BJ (cell line): ENCODE measurements at regions of chr1 and their contacts with region 1.

Region 1: GRCh38 chr1:27383039-27383605 is at the start of gene CD164L2:
- DNase-seq: no peak
- H3K4me3 ChIP-seq: no peak within 1 kb of the TSS
- H3K27me3 ChIP-seq: peaks cover 9% of the 10 kb centered on the region
- CTCF ChIP-seq: no peak
- polyA plus RNA-seq, gene CD164L2: not detected in 2 replicates

Region 2: GRCh38 chr1:27357281-27358037 is 25.7 kb before region 1 on chr1:
- CTCF ChIA-PET with region 1: interaction called, 15 read pairs
- POLR2A ChIA-PET with region 1: no interaction called
- DNase-seq: no peak
- H3K4me3 ChIP-seq: no peak overlapping the region
- H3K27me3 ChIP-seq: no peaks in the 10 kb centered on the region
- CTCF ChIP-seq: peak; percentile 91

Region 3: GRCh38 chr1:27365372-27366112 is 17.6 kb before region 1 on chr1:
- CTCF ChIA-PET with region 1: interaction called, 29 read pairs
- POLR2A ChIA-PET with region 1: interaction called, 3 read pairs
- DNase-seq: peak; percentile 65
- H3K4me3 ChIP-seq: peak overlapping the region; percentile 56
- H3K27me3 ChIP-seq: no peaks in the 10 kb centered on the region
- CTCF ChIP-seq: no peak

Region 4: GRCh38 chr1:27487966-27488884 is 105.1 kb after region 1 on chr1:
- CTCF ChIA-PET with region 1: no interaction called
- POLR2A ChIA-PET with region 1: no interaction called
- DNase-seq: no peak
- H3K4me3 ChIP-seq: peak overlapping the region; percentile 84
- H3K27me3 ChIP-seq: no peaks in the 10 kb centered on the region
- CTCF ChIP-seq: no peak